MCF 10A (cell line): ENCODE measurements at regions of chr14 and their contacts with region 1.

Region 1: GRCh38 chr14:90256354-90257131 is at the start of gene PSMC1:
- DNase-seq: peak; percentile 91
- H3K4me3 Mint-ChIP-seq: peak within 1 kb of the TSS; percentile 97
- H3K27ac Mint-ChIP-seq: peak within 1 kb of the TSS; percentile 100
- H3K4me1 Mint-ChIP-seq: peaks cover 16% of the 10 kb centered on the region
- H3K27me3 Mint-ChIP-seq: no peaks in the 10 kb centered on the region
- CTCF ChIP-seq: no peak
- total RNA-seq, gene PSMC1: 107 and 125 TPM in 2 replicates

Region 2: DNA sequence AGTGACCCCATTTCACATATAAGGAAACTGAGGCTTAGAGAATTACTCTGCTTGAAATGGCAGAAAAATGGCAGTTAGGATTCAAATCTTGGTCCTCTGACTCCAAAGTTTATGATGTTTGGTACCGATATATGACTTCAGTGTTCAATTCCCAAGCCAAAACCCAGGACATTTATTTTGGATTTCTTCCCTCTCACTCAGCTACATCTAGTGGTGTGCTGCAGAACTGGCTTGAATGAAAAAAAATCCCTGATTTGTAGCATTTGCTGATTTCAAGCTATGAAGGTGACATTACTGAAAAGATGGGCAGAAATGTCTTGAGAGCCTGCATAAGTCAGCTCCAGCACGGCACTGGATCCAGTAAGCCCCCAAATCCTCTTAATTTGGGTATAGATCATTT is 408.4 kb before region 1 on chr14:
- CTCF ChIA-PET with region 1: no interaction called
- POLR2A ChIA-PET with region 1: no interaction called
- intact Hi-C with region 1: no loop called
- DNase-seq: no peak
- H3K4me3 Mint-ChIP-seq: no peak overlapping the region
- H3K27ac Mint-ChIP-seq: no peak overlapping the region
- H3K4me1 Mint-ChIP-seq: peaks cover 5% of the 10 kb centered on the region
- H3K27me3 Mint-ChIP-seq: no peaks in the 10 kb centered on the region
- CTCF ChIP-seq: peak; percentile 12

Region 3: DNA sequence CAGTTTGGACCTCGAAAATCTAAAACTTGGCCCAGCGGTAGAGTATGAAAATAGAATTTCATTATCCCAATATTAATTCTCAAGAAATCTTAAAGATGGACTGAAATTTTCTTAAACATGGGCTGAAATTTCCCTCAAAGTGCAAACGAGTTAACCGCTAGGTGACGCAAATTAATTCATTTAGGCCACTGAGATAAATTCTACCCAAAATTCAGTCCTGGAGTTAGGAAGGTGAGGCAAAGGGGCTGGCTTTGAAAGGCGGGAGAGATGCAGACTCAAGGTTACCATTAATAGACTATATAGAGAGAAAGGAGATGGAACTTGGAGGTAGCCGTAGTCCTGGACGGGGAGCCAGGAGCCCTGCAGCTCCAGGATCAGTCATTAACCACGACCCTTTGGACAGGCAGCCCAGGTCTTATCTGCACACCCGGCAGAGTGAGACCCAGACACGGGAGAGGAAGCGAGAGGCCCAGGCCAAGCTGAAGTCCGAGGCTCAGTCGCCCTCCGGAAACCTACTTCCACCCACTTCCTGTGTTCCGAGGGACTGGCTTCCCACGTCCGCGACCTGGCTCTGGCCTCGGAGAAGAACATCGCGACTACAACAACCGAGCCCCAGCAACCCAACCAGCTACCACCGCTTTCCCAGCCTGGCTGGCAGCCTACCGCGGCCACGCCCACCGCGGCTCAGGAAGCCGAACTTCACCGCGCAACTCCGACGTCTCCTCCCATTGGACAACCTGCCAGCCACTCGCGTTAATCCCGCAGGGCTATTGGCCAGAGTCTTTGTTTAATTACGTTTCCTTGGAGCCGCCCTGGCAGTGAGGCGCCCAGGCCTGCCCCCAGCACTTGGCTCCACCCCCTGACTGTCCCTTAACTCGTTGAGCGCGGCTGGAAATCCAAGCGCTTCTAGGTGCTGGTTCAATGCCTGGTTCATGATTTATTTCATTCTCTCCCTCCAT is 302.2 kb before region 1 on chr14 and contains the start of gene EFCAB11:
- CTCF ChIA-PET with region 1: interaction called, 4 read pairs
- POLR2A ChIA-PET with region 1: interaction called, 11 read pairs
- intact Hi-C with region 1: no loop called
- DNase-seq: peak; percentile 99
- H3K4me3 Mint-ChIP-seq: peak within 1 kb of the TSS; percentile 88
- H3K27ac Mint-ChIP-seq: peak within 1 kb of the TSS; percentile 65
- H3K4me1 Mint-ChIP-seq: peaks cover 19% of the 10 kb centered on the region
- H3K27me3 Mint-ChIP-seq: no peaks in the 10 kb centered on the region
- CTCF ChIP-seq: peak; percentile 30
- total RNA-seq, gene EFCAB11: 10.6 and 11.1 TPM in 2 replicates

Region 4: GRCh38 chr14:90023176-90023896 is 233.2 kb before region 1 on chr14:
- CTCF ChIA-PET with region 1: no interaction called
- POLR2A ChIA-PET with region 1: no interaction called
- intact Hi-C with region 1: no loop called
- DNase-seq: no peak
- H3K4me3 Mint-ChIP-seq: no peak overlapping the region
- H3K27ac Mint-ChIP-seq: no peak overlapping the region
- H3K4me1 Mint-ChIP-seq: no peaks in the 10 kb centered on the region
- H3K27me3 Mint-ChIP-seq: no peaks in the 10 kb centered on the region
- CTCF ChIP-seq: no peak

Region 5: GRCh38 chr14:90266441-90267154 is 10.1 kb after region 1 on chr14:
- CTCF ChIA-PET with region 1: interaction called, 6 read pairs
- POLR2A ChIA-PET with region 1: interaction called, 19 read pairs
- intact Hi-C with region 1: no loop called
- DNase-seq: no peak
- H3K4me3 Mint-ChIP-seq: no peak overlapping the region
- H3K27ac Mint-ChIP-seq: no peak overlapping the region
- H3K4me1 Mint-ChIP-seq: no peaks in the 10 kb centered on the region
- H3K27me3 Mint-ChIP-seq: no peaks in the 10 kb centered on the region
- CTCF ChIP-seq: no peak